Caco-2 (cell line): ENCODE measurements at regions of chr10 and their contacts with region 1.

Region 1: DNA sequence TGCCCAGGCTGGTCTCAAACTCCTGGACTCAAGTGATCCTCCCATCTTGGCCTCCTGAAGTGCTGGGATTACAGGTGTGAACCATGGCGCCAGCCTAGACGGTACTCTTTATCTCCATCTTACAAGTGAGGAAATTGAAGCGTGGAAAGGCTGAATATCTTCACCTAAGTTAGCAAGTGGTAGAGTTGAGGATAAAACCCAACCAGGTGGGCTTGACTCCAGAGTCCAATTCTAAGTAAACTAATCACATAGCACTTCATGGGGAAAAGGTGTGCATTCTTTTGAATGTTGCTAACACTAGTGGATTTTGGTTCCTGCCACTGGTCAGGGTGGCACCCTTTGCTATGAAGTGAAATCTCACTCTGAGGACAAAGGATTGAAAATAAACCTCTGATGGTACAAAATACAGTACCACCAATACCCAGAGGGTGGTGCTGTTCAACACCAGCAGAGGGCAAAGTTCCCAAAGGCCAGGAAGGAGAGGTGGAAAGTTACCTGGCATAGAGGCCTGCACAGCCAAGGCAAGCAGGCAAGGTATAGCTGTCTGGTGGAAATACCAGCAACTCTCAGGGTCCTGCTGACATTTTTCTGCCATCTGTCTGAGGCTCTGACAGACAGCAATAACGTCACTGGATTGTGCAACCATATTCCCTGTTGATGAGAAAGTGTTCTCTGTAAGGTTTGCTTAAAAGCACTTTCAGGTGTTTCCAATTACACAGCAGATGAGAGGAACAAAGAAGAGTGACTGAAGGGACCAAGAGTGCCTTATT is 17.6 kb downstream of the ZDHHC16 start:
- DNase-seq: peak; percentile 78 to 80
- H3K4me3 ChIP-seq: no peak overlapping the region
- H3K4me3 Mint-ChIP-seq: no peak overlapping the region
- H3K27ac Mint-ChIP-seq: peak overlapping the region; percentile 39
- H3K4me1 ChIP-seq: no peaks in the 10 kb centered on the region
- H3K4me1 Mint-ChIP-seq: no peaks in the 10 kb centered on the region
- H3K27me3 ChIP-seq: no peaks in the 10 kb centered on the region
- H3K27me3 Mint-ChIP-seq: no peaks in the 10 kb centered on the region
- CTCF ChIP-seq: peak; percentile 89 to 90

Region 2: GRCh38 chr10:97170326-97170725 is 293.2 kb before region 1 on chr10:
- CTCF ChIA-PET with region 1: no interaction called
- POLR2A ChIA-PET with region 1: no interaction called
- intact Hi-C with region 1: no loop called
- DNase-seq: peak in 1 of 2 experiments; percentile 20
- H3K4me3 ChIP-seq: no peak overlapping the region
- H3K4me3 Mint-ChIP-seq: no peak overlapping the region
- H3K27ac Mint-ChIP-seq: no peak overlapping the region
- H3K4me1 ChIP-seq: no peaks in the 10 kb centered on the region; the same call in 1 of the 2 replicates
- H3K4me1 Mint-ChIP-seq: no peaks in the 10 kb centered on the region
- H3K27me3 ChIP-seq: no peaks in the 10 kb centered on the region
- H3K27me3 Mint-ChIP-seq: peaks cover 5% of the 10 kb centered on the region
- CTCF ChIP-seq: peak in 1 of 2 experiments; percentile 6

Region 3: GRCh38 chr10:97376413-97376812 is 87.1 kb before region 1 on chr10:
- CTCF ChIA-PET with region 1: no interaction called
- POLR2A ChIA-PET with region 1: no interaction called
- intact Hi-C with region 1: no loop called
- DNase-seq: no peak
- H3K4me3 ChIP-seq: no peak overlapping the region
- H3K4me3 Mint-ChIP-seq: no peak overlapping the region
- H3K27ac Mint-ChIP-seq: no peak overlapping the region
- H3K4me1 ChIP-seq: no peaks in the 10 kb centered on the region
- H3K4me1 Mint-ChIP-seq: no peaks in the 10 kb centered on the region
- H3K27me3 ChIP-seq: no peaks in the 10 kb centered on the region
- H3K27me3 Mint-ChIP-seq: no peaks in the 10 kb centered on the region
- CTCF ChIP-seq: no peak

Region 4: GRCh38 chr10:97553575-97554031 is 90.1 kb after region 1 on chr10:
- CTCF ChIA-PET with region 1: interaction called, 11 read pairs
- POLR2A ChIA-PET with region 1: no interaction called
- intact Hi-C with region 1: loop called (anchors 1 kb)
- DNase-seq: peak; percentile 70 to 74
- H3K4me3 ChIP-seq: no peak overlapping the region
- H3K4me3 Mint-ChIP-seq: no peak overlapping the region
- H3K27ac Mint-ChIP-seq: no peak overlapping the region
- H3K4me1 ChIP-seq: peaks cover 6% of the 10 kb centered on the region; the same call in 1 of the 2 replicates
- H3K4me1 Mint-ChIP-seq: peaks cover 12% of the 10 kb centered on the region
- H3K27me3 ChIP-seq: no peaks in the 10 kb centered on the region
- H3K27me3 Mint-ChIP-seq: no peaks in the 10 kb centered on the region
- CTCF ChIP-seq: peak; percentile 72 to 94

Region 5: DNA sequence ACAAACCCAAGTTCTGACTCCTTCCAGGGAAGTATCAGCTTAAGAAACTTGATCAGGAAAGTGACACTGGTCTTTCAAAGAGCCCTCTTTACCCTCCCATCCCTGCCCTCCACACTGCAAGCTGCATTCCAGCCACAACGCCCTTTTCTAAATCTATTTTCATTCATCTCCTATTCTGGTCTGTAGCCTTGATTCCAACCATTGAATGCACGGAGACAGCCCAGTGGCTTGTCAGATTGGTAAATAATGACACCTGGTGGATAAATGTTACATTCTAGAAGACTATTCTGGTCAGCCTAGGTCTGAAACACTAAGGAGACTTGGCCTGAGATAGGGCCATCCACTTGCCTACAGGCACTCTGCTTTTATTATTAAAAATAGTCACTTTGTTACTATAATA is 148.8 kb after region 1 on chr10:
- CTCF ChIA-PET with region 1: interaction called, 3 read pairs
- POLR2A ChIA-PET with region 1: no interaction called
- intact Hi-C with region 1: loop called (anchors 1 kb)
- DNase-seq: peak in 1 of 2 experiments; percentile 55
- H3K4me3 ChIP-seq: no peak overlapping the region
- H3K4me3 Mint-ChIP-seq: no peak overlapping the region
- H3K27ac Mint-ChIP-seq: no peak overlapping the region
- H3K4me1 ChIP-seq: no peaks in the 10 kb centered on the region
- H3K4me1 Mint-ChIP-seq: no peaks in the 10 kb centered on the region
- H3K27me3 ChIP-seq: no peaks in the 10 kb centered on the region
- H3K27me3 Mint-ChIP-seq: no peaks in the 10 kb centered on the region
- CTCF ChIP-seq: peak; percentile 44 to 52